ENCODE measurements at regions of chr12 and their contacts with region 1.

Region 1: DNA sequence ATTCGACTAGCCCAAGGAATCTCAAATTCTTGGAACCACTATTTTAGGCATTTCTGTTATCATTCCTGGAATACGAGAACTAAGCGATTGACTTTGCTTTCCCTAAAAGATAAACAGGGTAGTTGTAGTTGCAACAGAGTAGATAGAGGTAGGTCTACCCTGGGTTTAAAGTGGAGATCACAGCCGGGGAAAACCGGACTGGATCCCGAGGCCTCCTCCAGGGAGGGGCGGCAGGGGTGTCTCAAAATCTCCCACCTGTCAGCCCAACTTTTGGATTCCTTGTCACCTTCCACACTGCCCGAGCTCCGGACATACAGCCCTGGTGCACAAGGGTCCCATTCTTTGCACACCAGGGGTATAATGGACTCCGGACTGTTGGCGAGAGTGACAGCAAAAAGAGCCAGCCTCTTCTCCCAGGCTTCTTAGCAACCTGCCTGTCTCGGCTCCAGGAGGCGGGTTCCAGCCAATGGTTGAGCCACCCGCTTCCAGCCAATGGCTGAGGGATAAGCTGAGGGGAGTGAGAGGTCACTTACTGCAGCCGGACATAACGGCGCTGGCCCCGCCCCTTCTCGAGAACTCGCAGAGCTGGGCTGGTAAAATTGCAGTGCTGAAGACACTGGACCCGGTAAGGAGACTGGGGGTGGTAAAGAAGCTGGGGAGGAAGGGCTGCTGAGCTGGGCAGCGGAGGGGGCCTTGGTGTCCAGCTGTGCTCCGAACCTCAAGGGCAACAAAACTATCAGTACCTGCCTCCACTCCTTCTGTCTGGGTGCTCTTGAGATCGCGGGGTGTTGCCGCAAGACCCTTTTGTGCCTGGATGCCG is at the start of gene SUOX:
- DNase-seq: no peak
- H3K4me3 ChIP-seq: no peak within 1 kb of the TSS
- H3K27ac ChIP-seq: no peak within 1 kb of the TSS
- H3K4me1 ChIP-seq: no peaks in the 10 kb centered on the region
- CTCF ChIP-seq: no peak
- total RNA-seq, gene SUOX: 2.5 and 2.7 TPM in 2 replicates

Region 2: DNA sequence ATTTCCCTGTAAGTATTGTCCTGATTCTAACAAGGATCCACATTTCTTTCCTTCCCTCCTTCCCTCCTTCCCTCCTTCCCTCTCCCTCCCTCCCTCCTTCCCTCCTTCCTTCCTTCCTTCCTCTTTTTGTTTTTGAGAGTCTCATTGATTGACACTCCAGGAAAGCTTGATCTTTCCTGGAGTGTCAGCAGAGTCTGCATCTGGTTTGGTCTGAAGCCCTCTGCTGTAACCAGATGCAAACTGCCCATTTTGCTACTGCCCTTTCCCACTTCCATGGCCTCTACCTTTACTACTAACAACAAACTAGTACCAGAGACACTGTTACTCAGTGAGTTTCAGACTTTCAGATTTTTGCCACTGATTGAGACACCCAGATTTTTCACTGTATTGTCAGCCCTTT is 611.0 kb before region 1 on chr12:
- CTCF ChIA-PET with region 1: no interaction called
- POLR2A ChIA-PET with region 1: no interaction called
- intact Hi-C with region 1: no loop called
- DNase-seq: no peak
- H3K4me3 ChIP-seq: no peak overlapping the region
- H3K27ac ChIP-seq: no peak overlapping the region
- H3K4me1 ChIP-seq: no peaks in the 10 kb centered on the region
- CTCF ChIP-seq: no peak

Region 3: GRCh38 chr12:55824726-55825125 is 172.2 kb before region 1 on chr12:
- CTCF ChIA-PET with region 1: interaction called, 12 read pairs
- POLR2A ChIA-PET with region 1: no interaction called
- intact Hi-C with region 1: no loop called
- DNase-seq: no peak
- H3K4me3 ChIP-seq: peak overlapping the region; percentile 96
- H3K27ac ChIP-seq: peak overlapping the region; percentile 44
- H3K4me1 ChIP-seq: peaks cover 38% of the 10 kb centered on the region
- CTCF ChIP-seq: no peak

Region 4: GRCh38 chr12:56007564-56008559 is 10.9 kb after region 1 on chr12:
- CTCF ChIA-PET with region 1: interaction called, 3 read pairs
- POLR2A ChIA-PET with region 1: interaction called, 11 read pairs
- intact Hi-C with region 1: no loop called
- DNase-seq: peak; percentile 76
- H3K4me3 ChIP-seq: peak overlapping the region; percentile 77
- H3K27ac ChIP-seq: peak overlapping the region; percentile 66
- H3K4me1 ChIP-seq: peaks cover 9% of the 10 kb centered on the region
- CTCF ChIP-seq: no peak

Region 5: DNA sequence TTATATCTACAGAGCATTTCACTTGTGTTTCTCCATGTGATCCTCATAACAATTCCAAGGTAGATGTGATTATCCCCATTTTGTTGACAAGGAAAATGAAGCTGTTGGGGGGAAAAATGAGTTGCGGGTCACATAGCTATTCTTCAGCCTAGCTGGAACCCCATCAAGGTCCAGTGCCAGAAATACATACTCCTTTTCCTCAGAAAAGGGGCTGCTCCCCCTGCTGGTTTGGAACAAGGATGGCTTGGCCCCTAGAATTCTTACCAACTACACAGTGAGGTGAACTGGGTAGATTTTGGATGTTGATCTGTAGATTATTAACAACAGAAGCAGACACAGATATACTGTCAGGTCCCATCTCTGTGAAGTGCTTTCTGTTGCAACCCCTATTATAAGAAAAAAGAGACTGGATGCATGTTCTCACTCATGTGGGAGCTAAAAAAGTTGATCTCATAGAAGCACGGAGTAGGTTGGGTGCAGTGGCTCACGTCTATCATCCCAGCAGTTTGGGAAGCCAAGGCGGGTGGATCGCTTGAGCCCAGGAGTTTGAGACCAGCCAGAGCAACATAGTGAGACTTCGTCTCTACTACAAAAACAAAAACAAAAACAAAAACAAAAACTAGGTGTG is 32.9 kb after region 1 on chr12:
- CTCF ChIA-PET with region 1: interaction called, 4 read pairs
- POLR2A ChIA-PET with region 1: interaction called, 4 read pairs
- intact Hi-C with region 1: loop called (anchors 1 kb)
- DNase-seq: peak; percentile 66
- H3K4me3 ChIP-seq: no peak overlapping the region
- H3K27ac ChIP-seq: no peak overlapping the region
- H3K4me1 ChIP-seq: no peaks in the 10 kb centered on the region
- CTCF ChIP-seq: peak; percentile 88

Region 6: DNA sequence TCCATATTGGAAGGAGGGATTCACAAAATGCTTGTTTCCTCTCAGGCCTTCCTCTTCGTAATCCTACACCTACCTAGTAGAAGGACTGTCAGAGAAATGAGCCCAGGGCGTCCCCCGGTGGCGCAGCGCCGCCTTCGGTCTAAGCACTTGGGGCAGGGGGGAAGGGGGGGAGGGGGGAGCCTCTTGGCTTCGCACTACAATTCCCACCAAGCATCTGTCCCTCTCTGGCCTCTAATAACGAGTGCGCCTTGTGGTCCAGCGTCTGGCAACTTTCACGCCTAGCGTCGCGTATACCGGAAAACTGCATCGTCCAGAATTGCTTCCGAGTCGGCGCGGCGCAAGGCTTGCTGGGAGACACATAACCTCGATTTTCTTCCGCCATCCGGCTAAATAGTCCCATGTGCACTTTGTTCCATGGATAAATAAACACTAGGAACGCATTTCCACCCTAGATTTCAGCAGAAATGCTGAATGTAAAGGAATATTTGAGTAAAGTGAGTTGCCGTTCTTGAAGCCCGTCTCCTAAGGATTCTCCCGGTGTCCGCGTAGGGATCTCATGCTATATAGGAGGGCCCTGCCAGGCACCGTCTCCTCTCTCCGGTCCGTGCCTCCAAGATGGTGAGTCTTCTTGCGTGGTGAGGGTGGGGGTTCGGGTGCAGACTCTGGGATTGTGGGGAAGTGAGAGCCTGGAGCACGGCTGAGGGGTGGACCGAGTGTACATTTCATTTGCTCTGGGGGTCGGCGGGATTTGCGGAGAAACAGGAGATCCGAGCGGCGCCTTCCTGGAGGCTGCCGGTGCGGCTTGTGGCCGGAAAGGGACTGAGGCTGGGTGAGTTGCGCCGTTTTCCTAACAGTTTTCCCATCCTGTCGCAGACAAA is 44.9 kb after region 1 on chr12 and contains the start of gene RPS26:
- CTCF ChIA-PET with region 1: no interaction called
- POLR2A ChIA-PET with region 1: interaction called, 6 read pairs
- intact Hi-C with region 1: loop called (anchors 1 kb)
- DNase-seq: peak; percentile 100
- H3K4me3 ChIP-seq: peak within 1 kb of the TSS; percentile 83
- H3K27ac ChIP-seq: peak within 1 kb of the TSS; percentile 67
- H3K4me1 ChIP-seq: peaks cover 43% of the 10 kb centered on the region
- CTCF ChIP-seq: peak; percentile 77
- total RNA-seq, gene RPS26: 306 and 600 TPM in 2 replicates

Measured in OCI-LY7 (cell line).